ENCODE measurements at regions of chr17 and their contacts with region 1.

Region 1: DNA sequence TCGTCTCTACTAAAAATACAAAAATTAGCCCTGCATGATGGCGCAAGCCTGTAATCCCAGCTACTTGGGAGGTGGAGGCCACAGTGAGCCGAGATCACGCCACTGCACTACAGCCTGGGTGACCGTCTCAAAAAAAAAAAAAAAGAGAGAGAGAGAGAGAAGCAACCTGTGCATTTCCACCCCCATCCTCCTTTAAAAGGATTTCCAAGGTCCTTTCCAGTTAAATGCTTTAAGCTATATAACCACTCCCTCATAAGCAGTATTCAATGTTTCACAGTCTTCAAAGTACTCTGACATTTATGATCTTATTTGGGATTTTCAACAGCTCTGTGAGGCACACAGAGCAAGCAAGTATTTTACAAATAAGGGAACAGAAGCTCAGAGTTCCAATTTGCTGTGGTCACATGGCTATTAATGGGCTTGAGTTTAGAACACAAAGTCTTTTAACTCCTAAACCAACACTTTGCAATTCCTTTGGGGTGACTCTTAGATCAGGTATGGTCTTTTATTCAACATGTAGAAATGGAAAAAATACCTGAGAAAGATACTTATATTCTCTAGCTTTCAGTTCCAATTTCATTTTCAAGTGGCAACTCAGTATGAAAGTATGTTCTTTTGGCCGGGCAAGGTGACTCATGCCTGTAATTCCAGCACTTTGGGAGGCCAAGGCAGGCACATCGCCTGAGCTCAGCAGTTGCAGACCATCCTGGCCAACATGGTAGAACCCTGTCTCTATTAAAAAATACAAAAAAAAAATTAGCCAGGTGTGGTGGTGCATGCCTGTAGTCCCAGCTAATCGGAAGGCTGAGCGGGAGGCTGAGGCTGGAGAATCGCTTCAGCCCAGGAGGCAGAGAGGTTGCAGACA is 31.3 kb downstream of the SPOP start:
- DNase-seq: peak; percentile 25 to 60 (median 26)
- ATAC-seq: peak; percentile 61 to 65
- H3K4me3 ChIP-seq: no peak overlapping the region
- H3K27ac ChIP-seq: peak overlapping the region; percentile 91
- H3K4me1 ChIP-seq: peaks cover 10% of the 10 kb centered on the region
- H3K27me3 ChIP-seq: no peaks in the 10 kb centered on the region

Region 2: DNA sequence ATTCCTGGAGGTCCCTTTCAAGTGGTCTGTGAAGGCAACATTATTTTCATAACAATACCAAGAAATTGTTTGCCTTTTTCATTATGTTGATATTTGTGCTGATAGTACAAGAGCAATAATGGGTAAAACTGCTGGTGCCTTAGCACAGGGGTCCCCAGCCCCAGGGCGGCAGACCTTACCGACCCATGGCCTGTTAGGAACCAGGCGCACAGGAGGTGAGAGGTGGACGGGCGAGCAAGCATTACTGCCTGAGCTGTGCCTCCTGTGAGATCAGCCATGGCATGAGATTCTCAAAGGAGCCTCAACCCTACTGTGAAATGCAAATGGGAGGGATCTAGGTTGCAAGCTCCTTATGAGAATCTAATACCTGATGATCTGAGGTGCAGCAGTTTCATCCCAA is 16.3 kb after region 1 on chr17:
- intact Hi-C with region 1: loop called in 1 of 4 experiments (anchors 2 kb)
- DNase-seq: no peak
- ATAC-seq: no peak
- H3K4me3 ChIP-seq: no peak overlapping the region
- H3K27ac ChIP-seq: no peak overlapping the region
- H3K4me1 ChIP-seq: peaks cover 4% of the 10 kb centered on the region
- H3K27me3 ChIP-seq: no peaks in the 10 kb centered on the region